SK-N-SH (cell line): ENCODE measurements at regions of chr6 and their contacts with region 1.

Region 1: DNA sequence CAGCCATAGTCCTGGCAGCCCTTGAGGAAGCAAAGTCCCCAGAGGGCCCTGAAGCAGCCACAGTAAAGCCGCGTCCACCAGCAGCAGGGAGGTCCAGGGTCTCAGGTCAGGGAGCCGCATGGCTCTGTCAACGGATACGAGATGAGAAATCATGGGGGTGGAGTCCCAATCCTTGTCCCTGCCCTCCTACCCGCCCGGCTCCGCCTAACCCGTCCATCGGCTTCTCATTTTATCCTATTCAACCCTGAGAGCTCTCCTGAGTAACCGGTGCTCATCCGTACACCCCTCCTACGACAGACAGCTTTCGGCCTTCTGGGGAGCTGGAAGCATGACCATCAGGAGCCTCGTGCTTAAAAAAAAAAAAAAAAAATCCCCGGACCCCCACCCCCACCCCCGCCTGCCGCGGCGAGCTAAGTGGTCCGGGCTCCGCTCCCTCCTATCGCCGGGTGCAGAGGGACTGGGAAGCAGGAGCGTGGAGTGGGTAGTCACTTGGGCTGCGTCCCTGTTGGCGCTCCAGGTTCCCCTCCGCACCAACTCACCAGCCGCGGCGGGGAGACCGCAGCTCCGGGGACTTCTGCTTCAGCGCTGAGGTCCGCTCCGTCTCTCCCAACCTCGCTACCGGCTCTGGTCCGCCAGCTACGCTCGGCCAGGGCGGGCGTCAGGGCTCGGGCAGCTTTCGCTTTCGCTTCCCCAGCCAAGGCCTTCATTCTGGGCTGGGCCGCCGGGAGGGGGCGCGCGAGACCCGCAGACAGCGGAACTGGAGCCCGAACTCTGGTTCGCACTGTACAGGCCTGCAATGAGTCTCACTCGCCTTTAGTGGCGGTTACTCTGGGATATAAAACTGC is at the start of gene TAP2:
- DNase-seq: peak; percentile 95
- H3K4me3 ChIP-seq: peak within 1 kb of the TSS; percentile 87 to 90
- H3K27ac ChIP-seq: peak within 1 kb of the TSS; percentile 87 to 88
- H3K4me1 ChIP-seq: peaks cover 0 to 8% of the 10 kb centered on the region in 2 experiments; a peak in 1 of 4 replicates
- H3K27me3 ChIP-seq: no peaks in the 10 kb centered on the region
- CTCF ChIP-seq: peak; percentile 96
- EP300 ChIP-seq: peak in 1 of 2 experiments; percentile 38; a peak in 1 of 4 replicates
- RAD21 ChIP-seq: peak; percentile 85
- polyA plus RNA-seq, gene TAP2: 14.0 and 19.9 TPM in 2 replicates

Region 2: GRCh38 chr6:32825966-32826365 is 12.4 kb before region 1 on chr6:
- CTCF ChIA-PET with region 1: interaction called, 70 read pairs
- POLR2A ChIA-PET with region 1: no interaction called
- DNase-seq: no peak
- H3K4me3 ChIP-seq: no peak overlapping the region
- H3K27ac ChIP-seq: no peak overlapping the region
- H3K4me1 ChIP-seq: no peaks in the 10 kb centered on the region
- H3K27me3 ChIP-seq: no peaks in the 10 kb centered on the region; the same call in 1 of the 2 replicates
- CTCF ChIP-seq: peak; percentile 46
- EP300 ChIP-seq: no peak
- RAD21 ChIP-seq: peak; percentile 61

Region 3: GRCh38 chr6:32879691-32880090 is 41.4 kb after region 1 on chr6:
- CTCF ChIA-PET with region 1: interaction called, 13 read pairs
- POLR2A ChIA-PET with region 1: no interaction called
- DNase-seq: no peak
- H3K4me3 ChIP-seq: no peak overlapping the region; a peak in 1 of 4 replicates
- H3K27ac ChIP-seq: no peak overlapping the region
- H3K4me1 ChIP-seq: no peaks in the 10 kb centered on the region
- H3K27me3 ChIP-seq: peaks cover 42% of the 10 kb centered on the region
- CTCF ChIP-seq: no peak
- EP300 ChIP-seq: no peak
- RAD21 ChIP-seq: no peak

Region 4: GRCh38 chr6:32952817-32953739 is 114.7 kb after region 1 on chr6 and contains the start of gene HLA-DMA:
- CTCF ChIA-PET with region 1: interaction called, 11 read pairs
- POLR2A ChIA-PET with region 1: no interaction called
- DNase-seq: peak; percentile 42
- H3K4me3 ChIP-seq: peak within 1 kb of the TSS in 1 of 2 experiments; percentile 27; a peak in 1 of 4 replicates
- H3K27ac ChIP-seq: no peak within 1 kb of the TSS
- H3K4me1 ChIP-seq: peaks cover 0 to 6% of the 10 kb centered on the region in 2 experiments; a peak in 1 of 4 replicates
- H3K27me3 ChIP-seq: no peaks in the 10 kb centered on the region
- CTCF ChIP-seq: peak; percentile 77
- EP300 ChIP-seq: no peak
- RAD21 ChIP-seq: peak; percentile 47
- polyA plus RNA-seq, gene HLA-DMA: 1.2 and 1.5 TPM in 2 replicates